ENCODE measurements at regions of chr19 and their contacts with region 1.

Region 1: DNA sequence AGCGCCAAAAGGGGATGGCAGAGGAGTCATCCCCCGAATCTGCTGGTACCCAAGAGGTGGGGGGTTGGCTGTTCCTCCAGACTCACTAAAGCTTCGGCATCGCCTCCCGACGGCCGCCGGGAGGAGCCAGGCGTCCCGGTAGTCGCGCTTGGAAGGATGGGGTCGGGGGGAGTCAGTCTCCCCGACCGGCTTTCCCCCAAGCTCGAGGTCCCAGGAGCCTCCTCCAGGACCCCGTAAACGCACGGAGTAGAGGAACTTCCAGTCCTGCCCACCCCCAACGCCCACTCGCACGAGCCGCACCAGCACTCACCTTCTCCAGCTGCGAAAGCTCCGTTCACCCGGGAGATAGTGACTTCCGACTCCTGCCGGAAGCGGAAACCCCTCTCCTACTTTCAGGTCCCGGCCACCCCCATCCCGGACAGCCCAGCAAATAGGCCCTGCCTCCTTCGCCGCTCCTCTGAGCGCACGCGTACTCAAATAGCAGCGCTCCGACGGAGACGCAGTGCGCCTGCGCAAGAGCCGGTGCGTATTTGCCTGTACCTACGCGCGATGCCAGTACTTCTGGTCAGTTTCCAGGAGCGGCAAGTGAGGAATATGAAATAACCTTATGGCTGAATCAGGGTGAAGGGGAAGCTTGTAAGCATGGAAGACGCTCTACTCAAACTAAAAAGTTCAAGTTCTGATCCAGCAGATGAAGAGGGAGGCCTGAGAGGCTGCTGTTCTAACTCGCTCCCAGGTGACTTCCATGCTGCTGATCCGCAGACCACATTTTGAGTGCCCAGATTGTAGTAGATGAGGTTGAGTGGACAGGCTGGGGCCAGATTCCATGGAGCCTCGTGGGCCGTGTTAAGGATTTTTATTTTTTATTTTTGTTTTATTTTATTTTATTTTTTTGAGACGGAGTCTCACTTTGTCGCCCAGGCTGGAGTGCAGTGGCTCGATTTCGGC is at the start of gene ELOF1:
- DNase-seq: peak; percentile 96
- ATAC-seq: peak; percentile 90
- H3K4me3 ChIP-seq: peak within 1 kb of the TSS; percentile 94
- H3K27ac ChIP-seq: peak within 1 kb of the TSS; percentile 58
- H3K4me1 ChIP-seq: peaks cover 5% of the 10 kb centered on the region
- H3K27me3 ChIP-seq: no peaks in the 10 kb centered on the region
- CTCF ChIP-seq: peak in 1 of 3 experiments; percentile 12; a peak in 1 of 6 replicates
- EP300 ChIP-seq: no peak
- POLR2A ChIP-seq: peak; percentile 89
- RAD21 ChIP-seq: no peak
- polyA plus RNA-seq, gene ELOF1: 11.7 to 28.6 TPM

Region 2: GRCh38 chr19:10870955-10871603 is 688.1 kb before region 1 on chr19 and contains the start of gene CARM1:
- CTCF ChIA-PET with region 1: no interaction called
- POLR2A ChIA-PET with region 1: no interaction called
- RAD21 ChIA-PET with region 1: no interaction called
- SMC1A ChIA-PET with region 1: no interaction called
- in situ Hi-C with region 1: no loop called
- intact Hi-C with region 1: loop called (anchors 10 kb)
- DNase-seq: peak; percentile 79
- ATAC-seq: peak; percentile 84
- H3K4me3 ChIP-seq: peak within 1 kb of the TSS; percentile 68
- H3K27ac ChIP-seq: peak within 1 kb of the TSS; percentile 90
- H3K4me1 ChIP-seq: peaks cover 33% of the 10 kb centered on the region
- H3K27me3 ChIP-seq: no peaks in the 10 kb centered on the region
- CTCF ChIP-seq: peak; percentile 55 to 90 (median 66)
- EP300 ChIP-seq: no peak
- POLR2A ChIP-seq: no peak
- RAD21 ChIP-seq: peak; percentile 72
- polyA plus RNA-seq, gene CARM1: 0.45 to 0.49 TPM

Region 3: GRCh38 chr19:11535792-11536595 is 23.2 kb before region 1 on chr19:
- CTCF ChIA-PET with region 1: interaction called, 22 read pairs
- POLR2A ChIA-PET with region 1: interaction called, 9 read pairs
- RAD21 ChIA-PET with region 1: interaction called, 13 read pairs
- SMC1A ChIA-PET with region 1: interaction called, 4 read pairs
- in situ Hi-C with region 1: no loop called
- intact Hi-C with region 1: no loop called
- DNase-seq: no peak
- ATAC-seq: peak; percentile 89
- H3K4me3 ChIP-seq: peak overlapping the region; percentile 57
- H3K27ac ChIP-seq: no peak overlapping the region
- H3K4me1 ChIP-seq: peaks cover 6% of the 10 kb centered on the region
- H3K27me3 ChIP-seq: no peaks in the 10 kb centered on the region
- CTCF ChIP-seq: peak; percentile 88 to 92 (median 90)
- EP300 ChIP-seq: no peak
- POLR2A ChIP-seq: no peak
- RAD21 ChIP-seq: peak; percentile 36; the same call in 1 of the 2 replicates

Region 4: DNA sequence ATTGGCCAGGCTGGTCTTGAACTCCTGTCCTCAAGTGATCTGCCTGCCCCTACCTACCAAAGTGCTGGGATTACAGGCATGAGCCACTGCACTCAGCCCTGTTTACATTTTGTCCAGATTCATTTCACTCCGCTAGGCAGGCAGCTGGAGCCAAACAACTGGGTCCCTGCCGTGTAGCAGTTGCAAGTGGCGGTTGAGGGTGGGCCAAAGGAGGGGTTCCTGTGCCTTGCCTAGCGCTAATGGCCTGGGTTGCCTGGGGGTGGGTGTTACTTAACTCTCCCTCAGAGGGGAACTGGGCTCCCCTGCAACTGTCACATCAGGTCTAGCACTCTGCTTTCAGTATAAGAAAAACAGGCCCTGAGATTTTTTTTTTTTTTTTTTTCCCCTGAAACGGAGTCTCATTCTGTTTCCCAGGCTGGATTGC is 10.9 kb after region 1 on chr19:
- CTCF ChIA-PET with region 1: interaction called, 9 read pairs
- POLR2A ChIA-PET with region 1: interaction called, 36 read pairs
- RAD21 ChIA-PET with region 1: interaction called, 15 read pairs
- SMC1A ChIA-PET with region 1: interaction called, 9 read pairs
- in situ Hi-C with region 1: no loop called
- intact Hi-C with region 1: no loop called
- DNase-seq: no peak
- ATAC-seq: no peak
- H3K4me3 ChIP-seq: no peak overlapping the region
- H3K27ac ChIP-seq: peak overlapping the region; percentile 42
- H3K4me1 ChIP-seq: peaks cover 33% of the 10 kb centered on the region
- H3K27me3 ChIP-seq: no peaks in the 10 kb centered on the region
- CTCF ChIP-seq: no peak
- EP300 ChIP-seq: peak in 1 of 2 experiments; percentile 45; a peak in 1 of 4 replicates
- POLR2A ChIP-seq: no peak
- RAD21 ChIP-seq: no peak

Region 5: DNA sequence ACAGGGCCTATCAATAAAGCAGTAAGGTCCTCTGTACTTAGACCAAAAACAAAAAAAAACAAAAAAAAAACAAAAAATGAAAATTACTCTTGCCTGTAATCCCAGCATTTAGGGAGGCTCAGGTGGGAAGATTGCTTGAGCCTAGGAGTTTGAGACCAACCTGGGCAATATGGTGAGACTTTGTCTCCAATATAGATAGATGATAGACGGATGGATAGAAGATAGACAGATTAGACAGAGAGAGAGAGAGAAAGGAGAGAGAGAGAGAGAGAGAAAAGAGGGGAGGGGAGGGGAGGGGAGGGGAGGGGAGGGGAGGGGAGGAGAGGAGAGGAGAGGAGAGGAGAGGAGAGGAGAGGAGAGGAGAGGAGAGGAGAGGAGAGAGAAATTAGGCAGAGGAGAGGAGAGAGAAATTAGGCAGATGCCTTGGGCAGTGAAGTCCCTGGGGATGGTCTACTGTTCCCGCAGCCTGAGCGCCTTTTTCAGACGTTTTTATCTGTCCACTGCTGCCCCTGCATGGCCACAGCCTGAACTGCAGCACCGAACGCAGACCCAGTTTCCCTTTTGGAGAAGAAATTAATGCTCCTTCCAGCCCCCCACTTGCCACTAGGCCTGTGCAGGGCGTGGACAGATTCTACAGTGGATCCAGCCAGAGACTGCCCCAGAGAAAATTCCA is 28.3 kb after region 1 on chr19:
- CTCF ChIA-PET with region 1: interaction called, 225 read pairs
- POLR2A ChIA-PET with region 1: interaction called, 94 read pairs
- RAD21 ChIA-PET with region 1: interaction called, 172 read pairs
- SMC1A ChIA-PET with region 1: interaction called, 215 read pairs
- in situ Hi-C with region 1: no loop called
- intact Hi-C with region 1: loop called (anchors 1 kb)
- DNase-seq: no peak
- ATAC-seq: peak; percentile 81
- H3K4me3 ChIP-seq: no peak overlapping the region
- H3K27ac ChIP-seq: no peak overlapping the region
- H3K4me1 ChIP-seq: peaks cover 26% of the 10 kb centered on the region
- H3K27me3 ChIP-seq: no peaks in the 10 kb centered on the region
- CTCF ChIP-seq: peak; percentile 90 to 98 (median 97)
- EP300 ChIP-seq: no peak
- POLR2A ChIP-seq: no peak
- RAD21 ChIP-seq: peak; percentile 96

Region 6: GRCh38 chr19:11597202-11598102 is 38.3 kb after region 1 on chr19 and contains the start of gene ZNF627:
- CTCF ChIA-PET with region 1: interaction called, 225 read pairs
- POLR2A ChIA-PET with region 1: interaction called, 7 read pairs
- RAD21 ChIA-PET with region 1: interaction called, 5 read pairs
- SMC1A ChIA-PET with region 1: interaction called, 24 read pairs
- in situ Hi-C with region 1: no loop called
- intact Hi-C with region 1: no loop called
- DNase-seq: peak; percentile 94
- ATAC-seq: peak; percentile 99
- H3K4me3 ChIP-seq: peak within 1 kb of the TSS; percentile 83
- H3K27ac ChIP-seq: peak within 1 kb of the TSS; percentile 99
- H3K4me1 ChIP-seq: peaks cover 14% of the 10 kb centered on the region
- H3K27me3 ChIP-seq: no peaks in the 10 kb centered on the region
- CTCF ChIP-seq: peak; percentile 10 to 30 (median 17); a peak in 3 of 6 replicates
- EP300 ChIP-seq: 0 out of 4 replicates have a peak, but pooled peaks of 1 of the 2 experiments have one; percentile 15
- POLR2A ChIP-seq: peak; percentile 99
- RAD21 ChIP-seq: no peak
- polyA plus RNA-seq, gene ZNF627: 5.1 to 5.4 TPM

Measured in GM12878 (cell line).